GM18951 (cell line): ENCODE measurements at regions of chr10 and their contacts with region 1.

Region 1: GRCh38 chr10:98467506-98468346 is 21.0 kb upstream of the HPS1 start:
- POLR2A ChIP-seq: no peak

Region 2: DNA sequence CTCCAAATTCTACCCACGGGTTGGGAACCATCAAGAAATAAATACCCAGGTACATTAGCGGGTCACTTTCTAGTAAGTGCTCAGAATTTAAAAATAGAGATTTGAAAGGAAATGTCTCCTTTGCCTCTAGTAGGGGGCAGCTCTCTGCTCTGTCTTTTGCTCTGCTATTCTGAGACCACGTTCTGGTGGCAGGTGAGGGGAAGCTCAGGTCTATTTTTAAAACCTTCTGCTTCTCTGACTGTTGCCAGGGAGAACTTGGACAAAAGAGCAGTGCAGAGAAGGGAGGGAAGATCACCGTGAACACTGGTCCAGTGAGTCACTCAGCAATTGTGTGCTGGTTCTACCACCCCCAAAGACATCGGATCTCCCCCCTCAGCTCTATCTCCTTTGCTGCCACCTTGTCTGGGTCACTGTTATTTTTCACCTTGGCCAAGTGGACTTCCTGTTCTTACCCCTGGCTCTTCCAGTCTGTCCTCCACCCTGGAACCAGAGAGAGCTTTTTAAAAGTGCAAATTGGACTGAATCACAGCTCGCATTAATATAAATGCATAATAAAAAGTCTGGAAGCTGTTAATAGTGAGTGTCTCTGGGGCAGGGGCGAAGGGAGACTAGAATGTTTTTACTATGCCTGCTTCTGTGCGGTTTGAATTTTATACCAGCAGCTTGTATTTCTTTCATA is 127.3 kb before region 1 on chr10:
- in situ Hi-C with region 1: no loop called
- POLR2A ChIP-seq: no peak

Region 3: DNA sequence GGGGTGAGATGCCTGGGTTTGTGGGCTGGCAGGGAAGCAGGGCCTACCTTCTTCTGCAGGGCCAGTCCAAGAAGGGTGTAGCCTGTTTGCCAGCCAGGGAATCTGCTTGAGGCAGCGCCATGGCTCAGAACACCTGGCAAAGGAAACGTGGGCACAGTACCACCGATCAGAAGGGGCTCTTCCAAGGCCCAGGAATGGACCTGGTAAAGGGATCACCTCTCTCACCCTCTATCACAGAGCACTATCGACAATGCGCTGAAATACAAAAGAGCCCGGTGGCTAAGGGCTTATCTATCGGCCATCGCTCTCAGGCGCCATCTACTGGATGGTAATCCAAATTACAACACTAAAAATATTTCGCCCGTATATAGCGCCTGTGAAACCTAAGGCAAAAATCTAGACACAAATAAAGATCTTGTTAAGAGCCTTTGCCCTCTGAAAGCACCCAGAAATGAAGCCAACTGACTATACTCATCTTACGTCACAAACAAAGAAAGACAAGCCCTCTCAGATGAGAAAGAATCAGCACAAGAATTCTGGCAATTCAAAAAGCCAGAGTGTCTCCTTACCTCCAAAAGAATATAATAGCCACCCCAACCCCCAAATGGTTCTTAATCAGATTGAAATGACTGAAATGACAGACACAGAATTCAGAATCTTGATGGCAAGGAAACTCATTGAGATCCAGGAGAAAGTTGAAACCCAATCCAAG is 196.8 kb after region 1 on chr10:
- in situ Hi-C with region 1: loop called (anchors 10 kb)
- POLR2A ChIP-seq: no peak

Region 4: DNA sequence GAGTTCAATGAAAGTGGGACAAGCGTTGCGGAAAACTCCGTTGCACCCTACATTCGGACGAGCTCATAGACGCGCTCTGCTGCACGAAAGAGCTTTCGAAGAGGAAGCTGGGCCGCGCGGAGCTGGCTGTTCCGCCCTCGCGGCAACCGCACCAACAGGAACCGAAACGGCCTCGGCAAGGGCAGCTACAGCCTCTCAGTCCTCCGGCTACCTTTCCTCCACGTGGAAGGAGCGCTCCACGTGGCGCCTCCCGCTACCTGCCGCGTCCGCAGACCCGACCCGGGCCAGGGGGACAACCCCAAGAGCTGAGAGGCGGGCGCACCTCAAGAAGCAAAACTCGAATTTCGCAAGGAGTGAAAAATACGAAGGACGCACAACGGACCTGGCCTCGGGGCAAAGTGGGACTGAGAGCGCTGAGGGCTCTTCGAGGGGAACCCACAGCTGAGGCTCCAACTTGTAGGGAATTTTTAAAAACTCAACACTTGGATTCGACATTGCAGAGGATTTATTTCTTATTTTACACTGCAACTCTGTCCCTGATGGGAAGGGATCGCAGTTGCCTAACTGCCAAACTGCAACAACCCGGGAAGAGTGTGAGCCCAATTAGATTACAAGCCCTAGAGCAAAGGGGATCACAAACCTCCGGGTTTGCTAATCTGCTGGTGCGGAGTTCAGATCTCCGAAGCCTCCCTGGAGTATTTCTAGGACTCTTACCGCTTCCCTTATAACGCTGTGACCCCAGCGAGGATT is 766.5 kb after region 1 on chr10:
- in situ Hi-C with region 1: loop called (anchors 25 kb)
- POLR2A ChIP-seq: no peak